Right lobe of liver (tissue), 6 donors: ENCODE measurements at regions of chr20 and their contacts with region 1.

Region 1: GRCh38 chr20:48657475-48658470 is 170.0 kb downstream of the PREX1 start:
- DNase-seq: peak in 2 of 3 donors; percentile 61 to 77
- ATAC-seq: peak; percentile 85 to 91 (median 86)
- H3K4me3 ChIP-seq: no peak overlapping the region
- H3K27ac ChIP-seq: no peak overlapping the region
- H3K4me1 ChIP-seq: peaks cover 0 to 12% (median 0%) of the 10 kb centered on the region in 4 donors
- H3K27me3 ChIP-seq: no peaks in the 10 kb centered on the region
- CTCF ChIP-seq: peak; percentile 91 to 95 (median 92)
- POLR2A ChIP-seq: no peak

Region 2: GRCh38 chr20:48738399-48739304 is 80.9 kb after region 1 on chr20:
- intact Hi-C with region 1: no loop called
- DNase-seq: no peak
- ATAC-seq: peak; percentile 7 to 38 (median 24)
- H3K4me3 ChIP-seq: no peak overlapping the region
- H3K27ac ChIP-seq: no peak overlapping the region
- H3K4me1 ChIP-seq: no peaks in the 10 kb centered on the region
- H3K27me3 ChIP-seq: no peaks in the 10 kb centered on the region
- CTCF ChIP-seq: no peak
- POLR2A ChIP-seq: no peak

Region 3: DNA sequence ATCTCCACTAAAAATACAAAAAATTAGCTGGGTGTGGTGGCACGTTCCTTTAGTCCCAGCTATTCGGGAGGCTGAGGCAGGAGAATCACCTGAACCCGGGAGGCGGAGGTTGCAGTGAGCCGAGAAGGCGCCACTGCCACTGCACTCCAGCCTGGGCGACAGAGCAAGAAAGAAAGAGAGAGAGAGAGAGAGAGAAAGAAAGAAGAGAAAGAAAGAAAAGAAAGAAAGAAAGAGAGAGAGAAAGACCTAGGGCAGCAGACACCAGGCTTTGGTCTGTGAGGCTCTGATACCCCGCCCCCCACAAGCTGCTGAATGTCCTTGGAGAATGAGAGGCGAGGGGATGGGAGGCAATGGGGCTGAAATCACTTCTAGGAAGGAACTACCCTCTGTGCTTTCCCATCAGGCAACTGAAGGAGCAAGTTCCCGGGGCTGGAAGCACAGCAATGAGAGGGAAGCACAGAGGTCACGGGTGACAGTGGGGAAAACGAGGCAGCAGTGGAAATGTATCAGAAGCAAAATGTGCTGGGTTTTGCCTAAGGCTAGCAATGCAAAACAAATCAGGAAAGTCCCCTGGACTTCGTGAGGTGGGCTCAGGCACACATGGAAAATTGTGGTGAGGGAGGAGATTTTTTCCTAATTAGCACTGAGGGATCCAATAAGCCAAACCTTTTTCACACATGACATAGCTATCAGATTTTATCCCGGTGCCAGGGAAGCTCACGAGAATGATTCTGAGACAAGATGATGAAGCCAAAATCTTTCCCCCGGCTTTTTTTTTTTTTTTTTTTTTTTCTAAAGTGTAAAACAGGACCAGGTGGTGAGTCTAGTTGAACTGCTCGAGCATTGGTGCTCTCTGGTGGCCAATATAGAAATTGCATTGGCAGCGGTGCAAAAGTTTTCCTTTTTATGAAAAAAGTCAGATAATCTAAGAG is 246.9 kb after region 1 on chr20:
- intact Hi-C with region 1: loop called (anchors 2 to 5 kb)
- DNase-seq: peak in 1 of 3 donors; percentile 26
- ATAC-seq: peak; percentile 70 to 79 (median 78)
- H3K4me3 ChIP-seq: no peak overlapping the region
- H3K27ac ChIP-seq: no peak overlapping the region
- H3K4me1 ChIP-seq: no peaks in the 10 kb centered on the region
- H3K27me3 ChIP-seq: no peaks in the 10 kb centered on the region
- CTCF ChIP-seq: peak; percentile 70 to 89 (median 74)
- POLR2A ChIP-seq: no peak